ENCODE measurements at regions of chr17 and their contacts with region 1.

Region 1: DNA sequence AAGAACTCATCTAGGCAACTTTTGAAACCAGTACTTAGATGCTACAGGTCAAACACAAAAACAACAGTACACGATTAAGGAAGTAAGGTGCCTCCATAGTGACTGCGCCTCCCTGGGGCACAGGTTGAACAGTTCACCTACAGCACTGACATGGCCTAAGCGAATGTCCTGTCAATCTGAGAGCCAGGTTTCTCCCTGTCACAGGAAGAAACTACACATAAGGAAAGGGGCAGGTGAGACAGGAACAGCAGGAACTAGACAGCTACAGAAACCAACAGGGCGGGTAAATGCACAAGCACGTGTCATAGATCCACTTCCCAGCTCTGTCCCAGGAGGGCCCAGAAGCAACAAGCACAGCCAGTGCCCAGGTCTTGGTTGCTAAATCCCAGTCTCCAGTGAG is 8.0 kb upstream of the ARHGDIA start:
- DNase-seq: no peak
- ATAC-seq: no peak
- H3K4me3 ChIP-seq: no peak overlapping the region
- H3K27ac ChIP-seq: no peak overlapping the region
- H3K4me1 ChIP-seq: no peaks in the 10 kb centered on the region
- H3K27me3 ChIP-seq: no peaks in the 10 kb centered on the region
- CTCF ChIP-seq: no peak

Region 2: GRCh38 chr17:81840826-81841778 is 38.0 kb before region 1 on chr17:
- intact Hi-C with region 1: no loop called
- DNase-seq: no peak
- ATAC-seq: peak; percentile 29 to 76 (median 62)
- H3K4me3 ChIP-seq: peak overlapping the region in 2 of 10 donors; percentile 5 to 11
- H3K27ac ChIP-seq: peak overlapping the region in 8 of 10 donors; percentile 35 to 85 (median 64)
- H3K4me1 ChIP-seq: peaks cover 0 to 18% (median 10%) of the 10 kb centered on the region in 9 donors
- H3K27me3 ChIP-seq: no peaks in the 10 kb centered on the region
- CTCF ChIP-seq: no peak

Region 3: DNA sequence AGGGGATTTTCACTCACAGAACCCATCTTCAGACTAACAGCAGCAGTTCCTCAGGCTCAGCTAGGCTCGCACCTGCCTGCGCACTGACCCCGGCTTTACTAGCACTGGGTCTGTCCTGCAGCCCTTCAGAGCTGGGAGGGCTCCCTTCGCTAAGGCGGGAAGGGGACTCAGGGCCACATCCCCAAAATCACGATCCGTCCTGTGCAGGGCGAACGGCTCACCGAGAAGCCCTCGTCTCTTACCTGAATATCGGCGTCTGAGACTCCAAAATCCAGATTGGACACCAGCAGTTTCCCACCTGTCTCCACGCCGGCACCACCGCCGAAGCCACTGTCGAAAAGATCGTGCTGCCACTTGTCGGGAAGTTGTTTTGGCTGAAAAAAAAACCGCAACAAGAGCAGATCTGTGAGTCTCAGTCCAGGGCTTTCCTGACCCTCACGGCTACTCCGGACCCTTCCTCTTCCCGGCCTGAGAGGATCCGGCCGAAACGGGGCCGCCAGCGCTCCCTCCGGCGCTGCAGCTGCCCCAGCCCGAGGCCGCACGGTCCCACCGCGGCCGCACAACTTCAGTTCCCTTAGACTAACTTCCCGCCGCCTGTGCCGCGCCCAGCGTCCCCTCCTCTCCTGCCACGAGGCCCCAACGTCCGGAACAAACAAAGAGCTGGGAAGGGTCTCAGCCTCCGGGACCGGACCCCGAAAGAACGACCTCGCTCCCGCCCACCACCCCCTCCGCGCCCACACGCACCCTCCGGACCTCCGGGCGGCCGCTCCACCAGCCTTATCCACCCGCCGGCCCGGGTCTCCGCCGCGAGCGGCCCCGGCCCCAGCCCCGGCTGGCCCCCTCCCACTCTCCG is 11.6 kb after region 1 on chr17:
- intact Hi-C with region 1: no loop called
- DNase-seq: no peak
- ATAC-seq: no peak
- H3K4me3 ChIP-seq: peak overlapping the region; percentile 72 to 100 (median 98)
- H3K27ac ChIP-seq: peak overlapping the region; percentile 64 to 98 (median 96)
- H3K4me1 ChIP-seq: peaks cover 11 to 39% (median 27%) of the 10 kb centered on the region in 9 donors
- H3K27me3 ChIP-seq: no peaks in the 10 kb centered on the region
- CTCF ChIP-seq: no peak

Region 4: GRCh38 chr17:81923302-81924260 is 44.5 kb after region 1 on chr17:
- intact Hi-C with region 1: loop called in 1 of 10 experiments (anchors 5 kb)
- DNase-seq: peak; percentile 66 to 70
- ATAC-seq: peak; percentile 16 to 49 (median 36)
- H3K4me3 ChIP-seq: peak overlapping the region in 8 of 10 donors; percentile 18 to 47 (median 32)
- H3K27ac ChIP-seq: peak overlapping the region in 9 of 10 donors; percentile 3 to 97 (median 48)
- H3K4me1 ChIP-seq: peaks cover 29 to 86% (median 55%) of the 10 kb centered on the region in 9 donors
- H3K27me3 ChIP-seq: peaks cover 0 to 7% (median 0%) of the 10 kb centered on the region in 7 donors
- CTCF ChIP-seq: no peak